ENCODE measurements at regions of chr10 and their contacts with region 1.

Region 1: DNA sequence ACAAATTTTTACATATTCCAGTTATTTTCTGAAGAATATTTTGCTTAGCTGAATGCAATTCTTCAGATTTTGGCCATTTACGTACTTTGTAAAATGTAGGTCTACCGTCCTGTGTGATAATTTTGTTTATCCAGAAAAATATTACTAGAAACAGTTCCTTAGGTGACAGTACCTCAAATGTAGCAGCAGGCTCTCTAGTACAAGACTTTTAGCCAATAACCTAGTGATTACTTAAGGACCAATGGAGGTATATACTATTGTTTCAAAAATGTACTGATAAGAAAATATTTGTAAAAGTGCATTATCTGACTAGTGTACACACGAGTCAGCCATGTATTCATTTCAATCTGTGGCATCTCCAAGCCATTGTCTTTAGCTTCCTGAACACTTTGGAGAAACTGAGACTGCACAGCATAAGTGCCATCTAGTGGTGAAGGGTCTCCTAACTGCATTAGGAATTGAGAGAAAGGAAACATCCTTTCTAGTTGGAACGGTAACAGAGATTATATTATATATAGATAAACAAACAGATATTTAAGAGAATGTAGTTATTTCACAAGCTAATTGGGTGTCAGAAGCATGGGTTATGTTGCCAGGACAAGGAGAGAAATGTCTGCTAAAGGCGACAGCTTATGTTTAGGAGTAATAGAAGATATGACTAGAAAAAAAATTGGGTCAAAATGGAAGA is 23.7 kb downstream of the RTKN2 start:
- DNase-seq: peak; percentile 14 to 67 (median 31)
- ATAC-seq: peak; percentile 83
- H3K4me3 ChIP-seq: no peak overlapping the region
- H3K27ac ChIP-seq: no peak overlapping the region
- H3K4me1 ChIP-seq: no peaks in the 10 kb centered on the region
- H3K27me3 ChIP-seq: no peaks in the 10 kb centered on the region
- CTCF ChIP-seq: peak; percentile 67 to 81 (median 74)
- EP300 ChIP-seq: no peak
- POLR2A ChIP-seq: no peak
- RAD21 ChIP-seq: peak; percentile 82 to 90

Region 2: GRCh38 chr10:61140765-61141392 is 1104.0 kb before region 1 on chr10:
- CTCF ChIA-PET with region 1: no interaction called
- POLR2A ChIA-PET with region 1: no interaction called
- in situ Hi-C with region 1: no loop called
- intact Hi-C with region 1: loop called (anchors 10 kb)
- DNase-seq: peak; percentile 27 to 62 (median 38)
- ATAC-seq: peak; percentile 83
- H3K4me3 ChIP-seq: no peak overlapping the region
- H3K27ac ChIP-seq: no peak overlapping the region
- H3K4me1 ChIP-seq: no peaks in the 10 kb centered on the region
- H3K27me3 ChIP-seq: no peaks in the 10 kb centered on the region
- CTCF ChIP-seq: peak; percentile 52 to 79 (median 67); a peak in 5 of 6 replicates
- EP300 ChIP-seq: no peak
- POLR2A ChIP-seq: no peak
- RAD21 ChIP-seq: peak; percentile 70 to 79

Region 3: DNA sequence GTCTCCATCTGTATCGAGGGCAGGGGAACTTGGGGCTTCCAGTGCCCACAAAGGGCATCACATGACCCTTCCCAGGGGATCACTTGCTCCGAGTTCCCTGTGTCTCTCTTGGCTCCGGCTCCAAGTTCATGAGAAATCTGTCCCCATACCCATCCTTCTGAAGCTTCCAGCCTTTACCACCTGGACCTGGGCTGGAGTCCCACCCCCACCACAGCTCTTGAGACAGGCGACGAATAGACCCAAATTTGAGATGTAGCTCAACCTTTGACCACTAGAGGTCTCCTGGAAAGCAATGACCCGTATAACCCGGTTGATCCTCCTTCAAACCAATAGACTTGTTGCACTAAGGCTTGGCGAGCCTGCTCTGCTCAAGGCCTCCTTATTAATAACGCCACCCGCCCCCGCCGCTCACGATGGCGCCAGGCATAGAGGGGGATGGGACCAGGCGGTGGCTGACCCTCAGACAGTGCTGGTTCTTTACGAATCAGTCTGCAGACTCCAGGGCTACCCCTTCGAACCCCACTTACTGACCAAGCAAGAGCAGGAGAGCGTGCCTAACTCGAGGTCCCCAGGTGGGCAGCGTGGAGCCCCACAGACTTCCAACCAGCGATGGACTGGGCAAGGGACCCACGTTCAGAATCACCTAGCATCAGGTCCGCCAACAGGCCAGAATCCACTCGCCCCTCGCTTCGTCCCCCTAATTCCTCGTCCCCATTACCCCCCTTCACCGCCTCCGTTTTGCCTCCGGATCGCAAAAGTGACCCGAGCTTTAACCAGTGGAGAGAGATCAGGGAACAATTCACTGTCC is 347.9 kb before region 1 on chr10:
- CTCF ChIA-PET with region 1: no interaction called
- POLR2A ChIA-PET with region 1: no interaction called
- in situ Hi-C with region 1: no loop called
- intact Hi-C with region 1: loop called (anchors 1 kb)
- DNase-seq: peak; percentile 88 to 89 (median 88)
- ATAC-seq: peak; percentile 88
- H3K4me3 ChIP-seq: no peak overlapping the region
- H3K27ac ChIP-seq: no peak overlapping the region
- H3K4me1 ChIP-seq: peaks cover 6 to 24% of the 10 kb centered on the region in 2 experiments
- H3K27me3 ChIP-seq: no peaks in the 10 kb centered on the region
- CTCF ChIP-seq: peak; percentile 79 to 91 (median 80)
- EP300 ChIP-seq: no peak
- POLR2A ChIP-seq: no peak
- RAD21 ChIP-seq: peak; percentile 39 to 71

Region 4: DNA sequence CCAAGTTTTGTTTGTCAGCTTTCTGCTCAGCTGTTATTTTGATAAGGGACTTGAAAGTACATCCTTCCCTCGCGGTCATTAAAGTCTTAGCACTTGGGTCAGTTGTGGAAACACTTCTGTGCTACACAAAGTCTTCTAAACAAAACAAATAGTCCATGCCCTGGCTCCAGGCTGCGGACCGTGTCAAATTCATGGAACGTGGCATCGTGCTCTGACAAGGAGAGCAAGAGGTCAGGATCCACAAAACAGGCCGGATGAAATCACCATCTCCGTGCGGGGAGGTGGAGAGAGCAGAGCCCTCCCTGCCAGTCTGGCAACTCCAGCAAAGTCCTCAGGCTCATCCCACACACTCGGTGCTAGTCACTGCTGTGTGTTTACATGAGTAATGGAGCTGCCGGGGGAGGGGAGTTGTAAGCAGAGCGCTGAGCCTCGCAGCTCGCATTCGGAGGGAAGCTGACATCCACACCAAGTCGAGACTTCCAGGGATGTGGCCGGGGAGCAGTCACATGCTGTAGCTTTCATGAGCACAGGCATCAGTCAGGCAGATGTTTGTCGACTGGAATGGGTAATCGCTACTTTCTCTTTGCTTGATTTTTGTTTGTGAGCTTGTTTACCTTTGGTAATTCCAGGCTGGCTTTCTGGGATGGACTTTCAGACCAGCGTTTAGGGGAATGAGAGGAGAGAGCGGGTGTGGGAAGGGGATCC is 195.9 kb before region 1 on chr10:
- CTCF ChIA-PET with region 1: no interaction called
- POLR2A ChIA-PET with region 1: no interaction called
- in situ Hi-C with region 1: loop called (anchors 10 kb)
- intact Hi-C with region 1: no loop called
- DNase-seq: peak; percentile 46 to 80 (median 60)
- ATAC-seq: peak; percentile 93
- H3K4me3 ChIP-seq: no peak overlapping the region
- H3K27ac ChIP-seq: no peak overlapping the region
- H3K4me1 ChIP-seq: peaks cover 5 to 9% of the 10 kb centered on the region in 2 experiments; a peak in 3 of 5 replicates
- H3K27me3 ChIP-seq: peaks cover 4 to 9% of the 10 kb centered on the region in 2 experiments; a peak in 3 of 5 replicates
- CTCF ChIP-seq: no peak
- EP300 ChIP-seq: no peak
- POLR2A ChIP-seq: no peak
- RAD21 ChIP-seq: no peak

Region 5: DNA sequence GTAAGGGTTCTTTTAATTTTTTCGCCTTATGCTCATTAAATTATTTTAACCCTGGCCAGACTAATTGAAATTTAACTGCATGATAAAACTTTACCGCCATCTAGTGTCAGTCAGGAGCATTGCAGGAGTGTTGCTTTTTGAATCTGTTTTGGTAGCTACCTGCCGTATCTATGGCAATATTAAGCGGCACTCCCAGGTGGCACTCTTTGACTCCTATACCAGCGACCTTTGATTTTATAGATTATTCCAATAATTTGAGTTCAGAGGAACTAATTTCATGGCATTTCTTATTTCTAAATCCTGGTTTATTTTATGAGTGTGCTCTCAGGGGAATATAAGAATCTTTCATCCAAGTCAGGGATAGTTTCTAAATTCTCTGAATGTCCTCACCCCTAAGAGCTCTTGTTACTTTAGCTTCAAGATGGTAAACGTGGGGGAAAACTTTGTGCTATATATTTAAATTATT is 1475.2 kb after region 1 on chr10:
- CTCF ChIA-PET with region 1: no interaction called
- POLR2A ChIA-PET with region 1: no interaction called
- in situ Hi-C with region 1: no loop called
- intact Hi-C with region 1: loop called (anchors 5 kb)
- DNase-seq: peak; percentile 46 to 66 (median 61)
- ATAC-seq: peak; percentile 56
- H3K4me3 ChIP-seq: no peak overlapping the region
- H3K27ac ChIP-seq: no peak overlapping the region
- H3K4me1 ChIP-seq: no peaks in the 10 kb centered on the region
- H3K27me3 ChIP-seq: peaks cover 20 to 40% of the 10 kb centered on the region in 2 experiments
- CTCF ChIP-seq: peak; percentile 82 to 98 (median 83)
- EP300 ChIP-seq: no peak
- POLR2A ChIP-seq: no peak
- RAD21 ChIP-seq: peak; percentile 96

Measured in K562 (cell line).